ENCODE measurements at regions of chr6 and their contacts with region 1.

Region 1: GRCh38 chr6:134943522-134944111 is 6.3 kb downstream of the ALDH8A1 start:
- DNase-seq: no peak
- ATAC-seq: no peak
- H3K4me3 ChIP-seq: no peak overlapping the region
- H3K27ac ChIP-seq: no peak overlapping the region
- H3K4me1 ChIP-seq: no peaks in the 10 kb centered on the region
- H3K27me3 ChIP-seq: no peaks in the 10 kb centered on the region
- CTCF ChIP-seq: no peak
- POLR2A ChIP-seq: no peak

Region 2: DNA sequence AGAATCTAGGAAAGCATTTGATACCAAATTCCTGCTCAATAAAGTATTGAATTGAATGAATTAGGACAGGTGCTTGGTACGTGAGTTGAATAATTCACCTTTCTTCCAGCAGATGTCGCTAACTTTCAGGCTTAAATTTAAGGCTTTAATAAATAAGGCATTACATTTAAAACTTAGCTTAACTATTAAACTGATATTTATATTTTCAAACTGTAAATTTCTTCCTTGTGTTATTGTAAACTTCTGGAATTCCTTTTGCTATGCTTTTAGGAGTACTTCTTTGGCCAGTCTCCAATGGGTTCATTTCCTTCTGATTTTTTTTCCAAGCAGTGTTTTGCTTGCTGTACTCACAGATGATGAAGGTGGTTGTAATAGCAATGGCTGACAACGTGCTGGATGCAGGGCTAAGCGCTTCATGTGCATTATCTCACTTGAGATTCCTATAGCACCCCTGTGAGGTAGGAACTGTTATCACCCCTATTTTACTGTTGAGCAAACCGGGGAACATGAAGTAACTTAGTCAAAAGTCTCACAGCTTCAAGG is 819.9 kb before region 1 on chr6:
- in situ Hi-C with region 1: no loop called
- intact Hi-C with region 1: loop called (anchors 5 kb)
- DNase-seq: no peak
- ATAC-seq: peak in 1 of 2 donors; percentile 49
- H3K4me3 ChIP-seq: no peak overlapping the region
- H3K27ac ChIP-seq: no peak overlapping the region
- H3K4me1 ChIP-seq: no peaks in the 10 kb centered on the region
- H3K27me3 ChIP-seq: no peaks in the 10 kb centered on the region
- CTCF ChIP-seq: peak; percentile 17 to 74 (median 56)
- POLR2A ChIP-seq: no peak

Region 3: GRCh38 chr6:134161036-134161435 is 782.6 kb before region 1 on chr6:
- in situ Hi-C with region 1: loop called in 1 of 4 experiments (anchors 10 kb)
- intact Hi-C with region 1: loop called (anchors 5 kb)
- DNase-seq: no peak
- ATAC-seq: no peak
- H3K4me3 ChIP-seq: no peak overlapping the region
- H3K27ac ChIP-seq: no peak overlapping the region
- H3K4me1 ChIP-seq: peaks cover 0 to 8% of the 10 kb centered on the region in 2 donors
- H3K27me3 ChIP-seq: no peaks in the 10 kb centered on the region
- CTCF ChIP-seq: no peak
- POLR2A ChIP-seq: no peak

Region 4: GRCh38 chr6:134472661-134473060 is 471.0 kb before region 1 on chr6:
- in situ Hi-C with region 1: no loop called
- intact Hi-C with region 1: loop called (anchors 5 kb)
- DNase-seq: no peak
- ATAC-seq: no peak
- H3K4me3 ChIP-seq: no peak overlapping the region
- H3K27ac ChIP-seq: peak overlapping the region in 2 of 4 donors; percentile 48 to 88
- H3K4me1 ChIP-seq: peaks cover 24 to 34% of the 10 kb centered on the region in 2 donors
- H3K27me3 ChIP-seq: no peaks in the 10 kb centered on the region
- CTCF ChIP-seq: no peak
- POLR2A ChIP-seq: no peak

Region 5: DNA sequence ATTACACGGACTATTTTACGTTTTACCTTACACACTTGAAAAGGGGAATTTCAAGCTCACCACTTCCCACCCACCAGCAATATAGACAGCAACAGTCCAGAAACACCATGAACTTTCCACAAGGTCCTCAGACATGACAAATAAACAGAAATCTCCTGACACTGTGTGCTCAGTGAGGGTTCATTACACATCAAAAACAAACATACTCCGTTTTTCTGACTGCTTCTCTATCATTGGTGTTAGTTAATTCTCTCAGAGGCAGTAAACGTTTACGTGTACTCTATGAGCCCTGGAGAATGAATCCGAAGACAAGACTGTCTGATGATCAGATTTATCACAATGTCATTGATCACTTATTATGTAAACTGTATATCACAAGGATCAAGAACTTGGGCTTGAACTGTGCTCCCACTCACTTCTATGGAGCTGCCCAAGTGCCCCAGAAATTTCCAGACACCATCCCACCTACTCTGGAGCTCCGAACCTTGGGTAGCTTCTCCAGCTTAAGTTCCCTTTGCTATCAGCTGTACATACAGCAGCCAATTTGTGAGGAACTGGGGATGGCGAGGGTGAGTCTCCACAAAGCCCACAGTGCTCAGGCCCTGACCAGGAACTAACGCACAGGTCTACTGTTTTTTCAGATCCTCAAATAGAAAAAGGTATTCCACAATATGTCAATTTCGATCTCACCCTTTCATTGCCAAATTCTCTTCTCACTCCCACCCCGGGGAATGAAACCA is 79.7 kb before region 1 on chr6:
- in situ Hi-C with region 1: no loop called
- intact Hi-C with region 1: no loop called
- DNase-seq: no peak
- ATAC-seq: no peak
- H3K4me3 ChIP-seq: no peak overlapping the region
- H3K27ac ChIP-seq: no peak overlapping the region
- H3K4me1 ChIP-seq: no peaks in the 10 kb centered on the region
- H3K27me3 ChIP-seq: no peaks in the 10 kb centered on the region
- CTCF ChIP-seq: no peak
- POLR2A ChIP-seq: no peak

Measured in gastrocnemius medialis (tissue), 4 donors.